ENCODE measurements at regions of chr20 and their contacts with region 1.

Region 1: DNA sequence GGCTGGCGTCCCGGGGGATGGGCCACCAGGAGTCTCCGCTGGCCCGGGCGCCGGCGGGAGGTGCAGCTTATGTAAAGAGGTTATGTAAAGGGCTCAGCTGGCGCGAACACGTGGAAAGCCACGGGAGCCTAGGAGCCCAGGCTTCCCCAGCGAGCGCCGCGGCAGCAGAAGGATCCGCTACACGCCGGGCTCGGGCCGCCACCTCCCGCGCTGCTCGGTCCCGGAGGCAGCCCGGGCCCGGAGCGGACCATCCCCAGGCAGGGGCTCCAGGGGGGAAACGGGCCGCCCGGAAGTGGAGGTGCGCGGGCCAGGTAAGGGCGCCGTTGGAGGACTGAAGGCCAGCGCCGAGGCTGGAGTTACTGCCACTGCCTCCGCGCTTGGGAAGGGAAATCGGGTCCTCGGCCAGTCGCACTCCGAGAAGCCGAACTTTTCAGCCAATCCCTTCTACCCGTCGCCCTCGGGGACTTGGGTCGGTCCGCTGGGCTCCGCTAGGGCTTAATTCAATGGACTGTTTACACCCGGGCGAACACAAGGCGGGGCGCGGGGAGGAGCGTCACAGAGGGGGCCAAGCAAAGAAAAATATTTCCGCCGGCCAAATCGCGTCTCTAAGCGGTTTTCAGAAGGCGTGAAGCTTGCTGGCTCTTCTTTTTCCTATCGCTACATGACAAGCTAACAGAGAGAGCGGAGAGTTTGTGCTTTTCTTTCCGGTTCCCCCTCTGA is 398 bp downstream of the STK35 start:
- DNase-seq: peak; percentile 92 to 96
- ATAC-seq: peak; percentile 92 to 97 (median 94)
- H3K4me3 ChIP-seq: peak overlapping the region; percentile 67 to 98 (median 92)
- H3K27ac ChIP-seq: peak overlapping the region; percentile 97 to 100 (median 100)
- H3K4me1 ChIP-seq: peaks cover 9 to 45% (median 40%) of the 10 kb centered on the region in 9 donors
- H3K27me3 ChIP-seq: no peaks in the 10 kb centered on the region
- CTCF ChIP-seq: peak in 1 of 9 donors; percentile 3

Region 2: DNA sequence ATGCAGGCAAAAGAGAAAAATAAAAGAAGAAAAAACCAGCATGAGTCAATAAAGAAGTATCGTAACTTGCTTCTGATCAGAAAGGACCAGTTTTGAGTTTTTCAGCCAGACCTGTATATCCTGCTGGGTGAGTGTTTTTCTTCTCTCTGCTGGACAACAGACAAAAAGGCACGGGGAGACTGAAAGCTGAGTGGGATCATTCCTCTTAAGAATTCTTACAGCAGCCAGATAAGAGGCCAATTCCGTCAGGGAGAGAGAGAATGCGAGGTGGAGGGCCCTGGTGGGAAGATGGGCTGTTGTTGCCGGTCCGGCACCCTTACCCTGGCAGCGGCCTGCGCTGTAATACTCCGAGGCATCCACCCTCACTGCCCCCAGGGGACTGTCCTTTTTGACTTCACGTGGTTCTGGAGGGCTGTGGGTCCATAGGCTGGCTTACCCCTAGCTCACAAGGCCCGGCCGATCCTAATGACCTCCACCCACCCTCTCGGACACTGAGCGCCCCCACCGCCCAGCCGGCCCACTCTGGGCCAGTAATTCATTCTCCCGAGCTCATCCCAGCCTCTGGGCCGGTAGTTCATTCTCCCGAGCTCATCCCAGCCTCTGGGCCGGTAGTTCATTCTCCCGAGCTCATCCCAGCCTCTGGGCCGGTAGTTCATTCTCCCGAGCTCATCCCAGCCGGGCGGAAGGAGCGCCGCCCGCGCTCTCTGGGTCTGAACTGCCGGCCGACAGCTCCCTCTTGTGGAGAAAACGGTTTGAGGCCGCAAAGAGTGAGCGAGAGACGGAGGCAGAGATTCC is 325.1 kb before region 1 on chr20:
- intact Hi-C with region 1: loop called in 1 of 10 experiments (anchors 10 kb)
- DNase-seq: peak; percentile 88 to 90
- ATAC-seq: peak; percentile 94 to 100 (median 98)
- H3K4me3 ChIP-seq: peak overlapping the region; percentile 56 to 79 (median 71)
- H3K27ac ChIP-seq: peak overlapping the region in 8 of 10 donors; percentile 57 to 80 (median 70)
- H3K4me1 ChIP-seq: peaks cover 8 to 21% (median 10%) of the 10 kb centered on the region in 9 donors
- H3K27me3 ChIP-seq: peaks cover 0 to 3% (median 0%) of the 10 kb centered on the region in 7 donors
- CTCF ChIP-seq: peak; percentile 79 to 90 (median 84)

Region 3: GRCh38 chr20:1894951-1895673 is 206.9 kb before region 1 on chr20 and contains the start of gene SIRPA:
- intact Hi-C with region 1: loop called in 1 of 10 experiments (anchors 10 kb)
- DNase-seq: peak; percentile 67 to 69
- ATAC-seq: peak; percentile 48 to 70 (median 64)
- H3K4me3 ChIP-seq: peak within 1 kb of the TSS; percentile 61 to 82 (median 74)
- H3K27ac ChIP-seq: peak within 1 kb of the TSS; percentile 72 to 97 (median 94)
- H3K4me1 ChIP-seq: peaks cover 3 to 63% (median 60%) of the 10 kb centered on the region in 9 donors
- H3K27me3 ChIP-seq: peaks cover 0 to 16% (median 0%) of the 10 kb centered on the region in 7 donors
- CTCF ChIP-seq: no peak
- total RNA-seq, gene SIRPA: 16.7 to 45.8 (median 24.8) TPM

Region 4: GRCh38 chr20:2149507-2149906 is 47.5 kb after region 1 on chr20:
- intact Hi-C with region 1: loop called in 7 of 10 experiments (anchors 2 to 5 kb)
- DNase-seq: no peak
- ATAC-seq: no peak
- H3K4me3 ChIP-seq: no peak overlapping the region
- H3K27ac ChIP-seq: no peak overlapping the region
- H3K4me1 ChIP-seq: peaks cover 5 to 42% (median 19%) of the 10 kb centered on the region in 9 donors
- H3K27me3 ChIP-seq: no peaks in the 10 kb centered on the region
- CTCF ChIP-seq: no peak

Region 5: GRCh38 chr20:2349818-2350508 is 247.9 kb after region 1 on chr20:
- intact Hi-C with region 1: no loop called
- DNase-seq: no peak
- ATAC-seq: no peak
- H3K4me3 ChIP-seq: no peak overlapping the region
- H3K27ac ChIP-seq: no peak overlapping the region
- H3K4me1 ChIP-seq: peaks cover 0 to 6% (median 0%) of the 10 kb centered on the region in 9 donors
- H3K27me3 ChIP-seq: peaks cover 0 to 56% (median 44%) of the 10 kb centered on the region in 7 donors
- CTCF ChIP-seq: no peak

Region 6: GRCh38 chr20:2470423-2471193 is 368.6 kb after region 1 on chr20 and contains the start of gene SNRPB:
- intact Hi-C with region 1: loop called in 2 of 10 experiments (anchors 10 kb)
- DNase-seq: peak; percentile 94 to 97
- ATAC-seq: peak; percentile 99
- H3K4me3 ChIP-seq: peak within 1 kb of the TSS; percentile 37 to 96 (median 84)
- H3K27ac ChIP-seq: peak within 1 kb of the TSS; percentile 68 to 97 (median 90)
- H3K4me1 ChIP-seq: peaks cover 0 to 37% (median 23%) of the 10 kb centered on the region in 9 donors
- H3K27me3 ChIP-seq: no peaks in the 10 kb centered on the region
- CTCF ChIP-seq: no peak
- total RNA-seq, gene SNRPB: 41.4 to 82.1 (median 51.1) TPM